ENCODE measurements at regions of chr16 and their contacts with region 1.

Region 1: DNA sequence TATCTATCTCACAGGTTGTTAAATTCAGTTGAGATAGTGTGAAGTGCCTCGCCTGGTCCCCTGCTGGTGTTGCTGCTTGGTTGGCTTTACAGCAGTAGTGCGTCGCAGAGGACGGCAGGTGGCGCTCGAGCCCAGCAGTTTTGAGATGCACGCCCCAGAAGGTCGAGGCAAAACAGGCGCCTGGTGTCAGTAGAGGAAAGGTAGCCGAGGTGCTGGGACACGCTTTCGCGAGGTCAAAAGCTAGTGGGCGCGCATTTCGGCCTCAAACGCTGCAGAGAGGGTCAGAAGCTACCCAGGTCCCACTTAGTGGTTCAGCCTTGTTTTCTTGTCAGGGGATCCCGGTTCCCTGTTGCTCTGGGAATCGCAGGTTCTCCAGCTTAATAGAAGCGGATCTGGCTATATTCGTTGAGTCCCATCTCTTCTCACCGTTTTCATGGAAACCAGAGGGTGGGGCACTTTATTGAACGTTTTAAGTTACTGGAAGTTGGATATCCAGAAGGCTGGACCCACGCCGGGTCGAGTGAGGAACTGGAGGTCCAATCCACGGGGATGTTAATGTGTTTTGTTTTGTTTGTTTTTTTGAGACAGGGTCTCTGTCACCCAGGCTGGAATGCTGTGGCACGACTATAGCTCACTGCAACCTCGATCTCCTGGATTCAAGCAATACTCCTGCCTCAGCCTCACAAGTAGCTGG is 10.3 kb upstream of the ZFP90 start:
- DNase-seq: peak; percentile 94
- ATAC-seq: peak; percentile 85
- H3K4me3 Mint-ChIP-seq: peak overlapping the region; percentile 55
- H3K27ac Mint-ChIP-seq: no peak overlapping the region
- H3K4me1 Mint-ChIP-seq: peaks cover 13% of the 10 kb centered on the region
- H3K27me3 Mint-ChIP-seq: no peaks in the 10 kb centered on the region

Region 2: GRCh38 chr16:68382296-68382718 is 146.5 kb before region 1 on chr16:
- CTCF ChIA-PET with region 1: no interaction called
- POLR2A ChIA-PET with region 1: no interaction called
- intact Hi-C with region 1: no loop called
- DNase-seq: no peak
- ATAC-seq: peak; percentile 35
- H3K4me3 Mint-ChIP-seq: no peak overlapping the region
- H3K27ac Mint-ChIP-seq: no peak overlapping the region
- H3K4me1 Mint-ChIP-seq: peaks cover 18% of the 10 kb centered on the region
- H3K27me3 Mint-ChIP-seq: peaks cover 2% of the 10 kb centered on the region

Region 3: DNA sequence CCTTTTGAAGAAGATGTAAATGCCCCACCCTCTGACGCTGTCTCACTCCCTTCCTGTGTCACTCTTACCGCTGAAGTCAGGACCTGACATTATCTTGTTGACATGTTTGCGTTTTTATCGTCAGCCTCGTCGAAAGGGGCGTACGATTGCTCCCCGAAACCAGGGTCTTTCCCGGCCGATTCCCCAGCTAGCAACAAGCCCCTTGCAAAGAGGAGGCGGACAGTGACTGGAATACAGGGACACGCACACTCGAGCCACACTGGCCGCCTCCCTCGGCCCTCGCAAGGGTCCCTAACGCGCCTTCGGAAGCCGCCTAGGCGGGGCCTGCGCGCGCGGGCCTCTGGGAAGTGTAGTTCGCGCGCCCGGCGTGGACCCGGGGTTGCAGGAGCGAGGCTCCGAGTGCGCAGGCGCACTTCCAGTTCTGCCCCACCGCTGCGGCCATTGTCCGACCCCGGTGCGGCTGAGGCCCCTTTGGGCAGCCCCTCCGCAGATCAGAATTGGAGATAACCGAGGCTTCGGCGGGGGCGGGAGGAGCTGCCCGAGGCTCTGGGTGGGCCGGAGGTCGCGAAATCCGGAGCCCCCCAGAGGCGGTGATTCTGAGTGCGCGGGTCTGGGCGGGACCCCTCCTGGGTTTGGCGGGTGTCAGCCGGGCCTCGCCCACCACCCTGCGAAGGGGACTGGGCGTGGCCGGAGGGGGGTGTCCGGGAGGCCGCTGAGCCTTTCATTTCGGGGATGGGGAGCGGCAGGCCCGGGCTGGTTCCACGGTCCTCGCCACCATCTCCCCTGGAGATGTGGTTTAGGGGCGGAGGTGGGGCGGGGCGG is 10.3 kb after region 1 on chr16 and contains the start of gene ZFP90:
- CTCF ChIA-PET with region 1: interaction called, 19 read pairs
- POLR2A ChIA-PET with region 1: no interaction called
- intact Hi-C with region 1: loop called (anchors 1 kb)
- DNase-seq: peak; percentile 93
- ATAC-seq: peak; percentile 96
- H3K4me3 Mint-ChIP-seq: peak within 1 kb of the TSS; percentile 89
- H3K27ac Mint-ChIP-seq: peak within 1 kb of the TSS; percentile 98
- H3K4me1 Mint-ChIP-seq: peaks cover 16% of the 10 kb centered on the region
- H3K27me3 Mint-ChIP-seq: no peaks in the 10 kb centered on the region
- total RNA-seq, gene ZFP90: 31.4 to 31.6 TPM

Region 4: DNA sequence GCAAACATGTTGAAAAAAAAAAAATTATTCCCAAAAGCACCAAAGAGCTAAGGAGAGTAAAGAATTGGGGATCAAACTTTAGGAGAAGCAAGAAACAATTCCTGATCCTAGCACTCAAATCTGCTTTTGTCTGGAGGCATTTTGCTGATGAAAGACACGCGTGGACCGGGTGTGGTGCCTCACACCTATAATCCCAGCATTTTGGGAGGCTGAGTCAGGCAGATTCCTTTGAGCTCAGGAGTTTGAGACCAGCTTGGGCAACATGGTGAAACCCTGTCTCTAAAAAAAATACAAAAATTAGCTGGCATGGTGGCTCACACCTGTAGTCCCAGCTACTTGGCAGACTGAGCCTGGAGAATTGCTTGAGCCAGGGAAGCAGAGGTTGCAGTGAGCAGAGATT is 45.6 kb after region 1 on chr16:
- CTCF ChIA-PET with region 1: interaction called, 4 read pairs
- POLR2A ChIA-PET with region 1: no interaction called
- intact Hi-C with region 1: loop called in 1 of 2 experiments (anchors 5 kb)
- DNase-seq: no peak
- ATAC-seq: no peak
- H3K4me3 Mint-ChIP-seq: no peak overlapping the region
- H3K27ac Mint-ChIP-seq: no peak overlapping the region
- H3K4me1 Mint-ChIP-seq: no peaks in the 10 kb centered on the region
- H3K27me3 Mint-ChIP-seq: no peaks in the 10 kb centered on the region

Region 5: GRCh38 chr16:68644715-68645493 is 116.1 kb after region 1 on chr16 and contains the start of gene CDH3:
- CTCF ChIA-PET with region 1: interaction called, 3 read pairs
- POLR2A ChIA-PET with region 1: no interaction called
- intact Hi-C with region 1: loop called in 1 of 2 experiments (anchors 5 kb)
- DNase-seq: peak; percentile 52
- ATAC-seq: peak; percentile 27
- H3K4me3 Mint-ChIP-seq: peak within 1 kb of the TSS; percentile 61
- H3K27ac Mint-ChIP-seq: no peak within 1 kb of the TSS
- H3K4me1 Mint-ChIP-seq: peaks cover 12% of the 10 kb centered on the region
- H3K27me3 Mint-ChIP-seq: peaks cover 52% of the 10 kb centered on the region
- total RNA-seq, gene CDH3: 7.3 to 9.1 TPM

Region 6: GRCh38 chr16:68800257-68800875 is 271.5 kb after region 1 on chr16:
- CTCF ChIA-PET with region 1: interaction called, 5 read pairs
- POLR2A ChIA-PET with region 1: no interaction called
- intact Hi-C with region 1: loop called (anchors 1 to 2 kb)
- DNase-seq: peak; percentile 82
- ATAC-seq: peak; percentile 98
- H3K4me3 Mint-ChIP-seq: no peak overlapping the region
- H3K27ac Mint-ChIP-seq: no peak overlapping the region
- H3K4me1 Mint-ChIP-seq: peaks cover 11% of the 10 kb centered on the region
- H3K27me3 Mint-ChIP-seq: no peaks in the 10 kb centered on the region

Region 7: GRCh38 chr16:69123910-69124309 is 595.1 kb after region 1 on chr16:
- CTCF ChIA-PET with region 1: interaction called, 11 read pairs
- POLR2A ChIA-PET with region 1: no interaction called
- intact Hi-C with region 1: loop called in 1 of 2 experiments (anchors 1 kb)
- DNase-seq: peak; percentile 79
- ATAC-seq: peak; percentile 51
- H3K4me3 Mint-ChIP-seq: no peak overlapping the region
- H3K27ac Mint-ChIP-seq: no peak overlapping the region
- H3K4me1 Mint-ChIP-seq: peaks cover 20% of the 10 kb centered on the region
- H3K27me3 Mint-ChIP-seq: no peaks in the 10 kb centered on the region

Region 8: DNA sequence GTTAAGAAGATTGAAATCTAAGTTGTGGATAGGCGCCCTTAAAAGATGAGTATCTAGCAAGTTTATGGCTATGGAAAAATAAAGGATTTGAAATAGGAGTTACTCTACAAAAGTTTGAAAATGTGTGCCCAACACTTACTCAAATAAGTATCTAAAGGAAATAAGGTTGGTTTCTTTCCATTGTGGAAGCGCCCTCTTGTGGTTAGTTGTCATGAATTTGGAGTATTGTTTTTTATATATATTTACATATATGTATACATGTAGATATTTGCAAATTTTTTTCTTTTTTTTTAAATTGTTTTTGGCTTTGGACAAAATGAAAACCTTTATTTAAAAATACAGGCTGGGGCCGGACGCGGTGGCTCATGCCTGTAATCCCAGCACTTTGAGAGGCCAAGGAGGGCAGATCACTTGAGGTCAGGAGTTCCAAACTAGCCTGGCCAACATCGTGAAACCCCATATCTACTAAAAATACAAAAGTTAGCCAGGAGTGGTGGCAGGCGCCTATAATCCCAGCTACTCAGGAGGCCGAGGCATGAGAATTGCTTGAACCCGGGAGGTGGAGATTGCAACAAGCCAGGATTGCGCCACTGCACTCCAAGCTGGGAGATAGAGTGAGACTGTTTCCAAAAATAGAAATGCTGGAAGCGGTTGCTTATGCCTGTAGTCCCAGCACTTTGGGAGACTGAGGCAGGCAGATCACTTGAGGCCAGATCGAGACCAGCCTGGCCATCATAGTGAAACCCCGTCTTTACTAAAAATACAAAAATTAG is 758.3 kb after region 1 on chr16:
- CTCF ChIA-PET with region 1: interaction called, 3 read pairs
- POLR2A ChIA-PET with region 1: no interaction called
- intact Hi-C with region 1: loop called (anchors 2 kb)
- DNase-seq: peak; percentile 51
- ATAC-seq: peak; percentile 36
- H3K4me3 Mint-ChIP-seq: no peak overlapping the region
- H3K27ac Mint-ChIP-seq: no peak overlapping the region
- H3K4me1 Mint-ChIP-seq: peaks cover 3% of the 10 kb centered on the region
- H3K27me3 Mint-ChIP-seq: no peaks in the 10 kb centered on the region